Aorta (tissue), 5 donors: ENCODE measurements at regions of chr18 and their contacts with region 1.

Region 1: DNA sequence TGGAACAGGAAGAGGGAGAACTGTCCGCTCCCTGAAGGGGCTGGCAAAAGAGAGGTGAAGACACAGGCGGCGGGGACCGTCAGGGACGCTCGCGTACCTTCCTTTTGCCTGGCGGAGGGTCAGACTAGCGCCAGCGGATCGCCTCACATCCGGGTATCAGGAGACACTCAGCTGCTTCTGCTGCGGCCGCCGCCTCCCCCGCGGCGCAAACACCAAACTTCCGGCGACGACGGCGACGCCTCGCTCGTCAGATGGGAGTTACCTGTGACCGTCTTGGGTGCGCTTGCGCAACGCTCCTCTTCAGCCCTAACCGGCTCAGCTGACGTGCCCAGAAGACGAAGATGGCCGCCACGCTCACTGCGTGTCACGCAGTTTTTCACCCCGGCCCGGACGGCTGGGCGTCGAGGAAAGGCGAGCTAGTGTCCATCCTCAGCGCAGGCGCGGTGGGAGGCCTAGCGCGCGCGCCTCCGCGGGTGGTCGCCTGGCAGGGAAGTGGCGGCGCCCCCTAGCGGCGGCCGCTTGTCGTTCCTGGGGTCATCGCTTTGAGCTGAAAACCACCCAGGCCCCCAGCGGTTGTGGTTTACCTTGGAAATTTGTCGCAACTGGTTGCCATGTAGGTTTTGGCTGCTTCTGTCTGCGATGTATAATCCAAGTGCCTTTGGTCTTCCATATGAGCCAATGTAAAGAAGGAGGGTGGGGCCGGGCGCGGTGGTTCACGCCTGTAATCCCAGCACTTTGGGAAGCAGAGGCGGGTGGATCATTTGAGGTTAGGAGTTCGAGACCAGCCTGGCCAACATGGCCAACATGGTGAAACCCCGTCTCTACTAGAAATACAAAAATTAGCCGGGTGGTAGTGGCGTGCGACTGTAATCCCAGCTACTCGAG is at the start of gene ESCO1:
- DNase-seq: peak; percentile 97
- ATAC-seq: peak; percentile 94
- H3K4me3 ChIP-seq: peak within 1 kb of the TSS; percentile 79 to 88
- H3K27ac ChIP-seq: peak within 1 kb of the TSS; percentile 74 to 87
- H3K4me1 ChIP-seq: no peaks in the 10 kb centered on the region
- H3K27me3 ChIP-seq: no peaks in the 10 kb centered on the region
- total RNA-seq, gene ESCO1: 19.1 to 21.2 TPM

Region 2: DNA sequence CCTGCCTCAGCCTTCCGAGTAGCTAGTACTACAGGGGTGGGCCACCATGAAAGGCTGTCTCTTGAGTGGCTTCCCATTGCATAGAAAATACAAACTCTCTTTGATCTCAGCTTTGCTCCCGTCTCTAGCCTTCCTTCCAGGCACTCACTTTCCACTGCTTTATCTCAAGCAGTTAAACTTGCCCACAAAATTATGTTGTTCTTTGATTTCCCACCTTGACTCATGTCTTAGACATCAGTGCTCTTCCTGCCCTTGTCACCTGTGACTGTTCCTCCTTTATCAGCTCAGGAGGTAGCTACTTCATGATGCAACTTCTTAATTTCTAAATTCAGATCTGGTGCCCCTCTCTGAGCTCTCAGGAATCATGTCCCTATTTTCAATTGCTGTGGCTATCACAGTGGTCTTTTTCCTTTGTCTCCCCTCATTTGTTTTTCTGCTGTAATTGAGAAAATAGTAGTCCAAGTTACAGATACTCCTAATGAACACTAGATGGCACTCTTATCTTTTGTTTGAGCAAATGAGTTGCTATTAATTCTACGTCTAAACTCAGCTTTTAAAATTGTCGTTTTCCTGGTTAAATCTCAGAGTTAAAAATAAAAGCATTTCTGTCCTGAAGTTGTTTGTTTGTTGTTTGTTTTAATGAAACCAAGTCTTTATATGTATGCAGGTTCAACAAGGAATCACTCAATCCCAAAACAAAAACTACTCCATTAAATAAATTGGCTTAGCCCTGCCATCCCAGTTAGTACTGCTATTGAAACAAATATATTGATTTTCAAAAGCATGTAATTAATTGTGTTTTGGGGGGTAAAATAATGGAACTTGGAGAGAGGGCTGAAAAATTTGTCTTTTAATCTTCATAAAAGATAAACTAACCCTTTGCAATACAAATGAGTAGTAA is 405.6 kb before region 1 on chr18:
- intact Hi-C with region 1: loop called in 1 of 2 experiments (anchors 10 kb)
- DNase-seq: no peak
- ATAC-seq: no peak
- H3K4me3 ChIP-seq: no peak overlapping the region
- H3K27ac ChIP-seq: no peak overlapping the region
- H3K4me1 ChIP-seq: no peaks in the 10 kb centered on the region
- H3K27me3 ChIP-seq: no peaks in the 10 kb centered on the region

Region 3: DNA sequence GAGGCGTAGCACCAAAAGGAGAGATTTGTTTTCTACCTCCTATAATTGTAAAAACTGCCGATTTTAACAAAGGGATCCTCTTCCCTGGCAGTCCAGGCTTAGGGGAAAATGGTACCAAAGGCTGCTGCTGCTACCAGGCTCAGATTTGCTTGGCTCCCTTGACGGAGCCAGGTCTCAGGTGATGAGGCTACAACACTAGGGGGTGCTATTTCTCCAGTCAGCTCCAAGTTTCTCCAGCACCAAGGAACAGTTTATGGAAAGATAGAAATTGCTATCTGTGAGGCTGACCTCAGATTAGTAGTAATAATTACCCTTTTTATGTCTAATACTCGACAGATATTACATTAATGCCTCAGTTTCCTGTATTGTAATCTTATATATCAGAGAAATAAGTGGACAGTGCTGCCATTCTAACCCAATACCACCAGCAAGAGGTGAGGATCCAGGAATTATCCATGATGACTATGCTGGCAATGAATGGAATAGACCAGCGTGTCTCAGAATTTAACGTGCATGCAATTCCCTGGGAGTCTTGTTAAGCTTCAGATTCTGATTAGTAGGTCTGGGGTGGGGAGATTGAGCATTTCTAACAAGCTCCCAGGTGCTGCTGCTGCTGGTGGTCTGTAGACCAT is 111.5 kb before region 1 on chr18:
- intact Hi-C with region 1: loop called (anchors 5 to 10 kb)
- DNase-seq: no peak
- ATAC-seq: peak; percentile 50
- H3K4me3 ChIP-seq: no peak overlapping the region
- H3K27ac ChIP-seq: no peak overlapping the region
- H3K4me1 ChIP-seq: no peaks in the 10 kb centered on the region
- H3K27me3 ChIP-seq: no peaks in the 10 kb centered on the region

Region 4: GRCh38 chr18:21499997-21500396 is 100.8 kb before region 1 on chr18:
- intact Hi-C with region 1: no loop called
- DNase-seq: no peak
- ATAC-seq: no peak
- H3K4me3 ChIP-seq: no peak overlapping the region
- H3K27ac ChIP-seq: no peak overlapping the region
- H3K4me1 ChIP-seq: no peaks in the 10 kb centered on the region
- H3K27me3 ChIP-seq: no peaks in the 10 kb centered on the region

Region 5: GRCh38 chr18:21636769-21637168 is 36.0 kb after region 1 on chr18:
- intact Hi-C with region 1: no loop called
- DNase-seq: no peak
- ATAC-seq: no peak
- H3K4me3 ChIP-seq: no peak overlapping the region
- H3K27ac ChIP-seq: no peak overlapping the region
- H3K4me1 ChIP-seq: no peaks in the 10 kb centered on the region
- H3K27me3 ChIP-seq: no peaks in the 10 kb centered on the region

Region 6: GRCh38 chr18:21740724-21741510 is 140.1 kb after region 1 on chr18 and contains the start of gene MIB1:
- intact Hi-C with region 1: loop called in 1 of 2 experiments (anchors 5 kb)
- DNase-seq: peak in 1 of 2 donors; percentile 88
- ATAC-seq: peak; percentile 94
- H3K4me3 ChIP-seq: peak within 1 kb of the TSS; percentile 85 to 95
- H3K27ac ChIP-seq: peak within 1 kb of the TSS; percentile 53 to 60
- H3K4me1 ChIP-seq: no peaks in the 10 kb centered on the region
- H3K27me3 ChIP-seq: no peaks in the 10 kb centered on the region
- total RNA-seq, gene MIB1: 57.1 to 63.5 TPM